GM23248 (cell line): ENCODE measurements at regions of chr17 and their contacts with region 1.

Region 1: GRCh38 chr17:5584383-5585286 is at the start of gene NLRP1:
- DNase-seq: peak; percentile 98
- H3K4me3 ChIP-seq: peak within 1 kb of the TSS; percentile 98
- H3K27ac ChIP-seq: peak within 1 kb of the TSS; percentile 97
- H3K4me1 ChIP-seq: peaks cover 48% of the 10 kb centered on the region
- H3K27me3 ChIP-seq: no peaks in the 10 kb centered on the region
- total RNA-seq, gene NLRP1: 33.4 and 36.0 TPM in 2 replicates

Region 2: GRCh38 chr17:5706577-5707216 is 122.1 kb after region 1 on chr17:
- in situ Hi-C with region 1: no loop called
- DNase-seq: peak; percentile 74
- H3K4me3 ChIP-seq: no peak overlapping the region
- H3K27ac ChIP-seq: no peak overlapping the region
- H3K4me1 ChIP-seq: no peaks in the 10 kb centered on the region
- H3K27me3 ChIP-seq: peaks cover 2% of the 10 kb centered on the region

Region 3: DNA sequence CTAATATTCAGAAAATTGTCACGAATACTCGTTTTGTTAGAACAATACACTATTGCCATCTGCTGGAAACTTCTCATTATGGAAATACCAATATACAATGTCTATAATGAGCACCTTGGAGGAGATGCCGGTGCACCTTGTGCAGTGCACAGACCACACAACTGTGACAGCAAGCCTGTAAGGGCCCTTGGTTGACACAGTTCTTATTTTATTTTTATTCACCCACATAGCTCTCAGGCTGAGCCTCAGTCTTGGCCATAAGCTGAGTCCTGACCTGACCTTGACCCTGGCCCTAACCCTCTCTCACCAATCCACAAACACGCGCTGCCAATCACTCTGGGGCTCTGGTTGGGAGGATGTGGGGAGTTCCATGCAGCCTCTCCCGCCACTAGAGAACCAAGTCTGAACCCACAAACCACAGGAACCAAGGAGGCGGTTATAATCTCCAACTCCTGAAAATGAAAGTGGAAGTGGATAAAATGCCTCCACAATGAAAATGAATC is 842.7 kb after region 1 on chr17:
- in situ Hi-C with region 1: loop called (anchors 5 kb)
- DNase-seq: peak; percentile 64
- H3K4me3 ChIP-seq: peak overlapping the region; percentile 28; the same call in 1 of the 2 replicates
- H3K27ac ChIP-seq: no peak overlapping the region
- H3K4me1 ChIP-seq: no peaks in the 10 kb centered on the region
- H3K27me3 ChIP-seq: no peaks in the 10 kb centered on the region